Prostate gland (tissue), 2 donors: ENCODE measurements at regions of chr19 and their contacts with region 1.

Region 1: DNA sequence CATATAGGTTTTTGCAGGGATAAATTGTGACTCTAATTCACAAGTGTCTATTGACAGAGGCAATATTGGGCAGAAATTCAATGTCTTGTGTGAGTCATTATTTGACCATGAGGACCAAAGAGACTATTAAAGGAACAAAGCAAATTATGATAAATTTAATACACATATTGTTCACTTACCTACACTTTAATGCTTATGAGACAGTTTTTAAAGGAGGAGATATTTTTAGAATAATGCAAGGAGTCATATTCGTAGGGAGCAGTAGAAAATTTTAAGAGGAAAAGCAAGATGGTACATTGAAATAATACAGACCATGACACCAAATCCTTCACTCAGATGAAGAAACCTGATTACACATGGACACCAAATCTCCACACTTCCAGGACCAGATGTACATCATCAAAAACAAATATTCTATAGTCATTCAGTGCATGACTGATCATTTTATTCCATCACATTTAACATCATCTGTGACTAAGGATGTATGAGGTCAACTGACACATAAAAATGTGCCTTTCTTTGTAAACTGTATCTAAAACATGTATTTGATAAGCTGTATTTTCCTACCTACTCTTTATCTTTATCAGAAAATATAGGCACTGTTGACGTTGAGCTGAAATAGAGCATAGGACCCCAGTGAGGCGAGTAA is 4.2 kb upstream of the OR7A17 start:
- DNase-seq: no peak
- H3K4me3 ChIP-seq: no peak overlapping the region
- H3K27ac ChIP-seq: no peak overlapping the region
- H3K4me1 ChIP-seq: no peaks in the 10 kb centered on the region
- H3K27me3 ChIP-seq: no peaks in the 10 kb centered on the region
- CTCF ChIP-seq: no peak
- POLR2A ChIP-seq: no peak

Region 2: GRCh38 chr19:14571695-14572490 is 318.2 kb before region 1 on chr19 and contains the start of gene NDUFB7:
- intact Hi-C with region 1: loop called (anchors 10 kb)
- DNase-seq: peak; percentile 89
- H3K4me3 ChIP-seq: peak within 1 kb of the TSS; percentile 68 to 99
- H3K27ac ChIP-seq: peak within 1 kb of the TSS; percentile 54 to 82
- H3K4me1 ChIP-seq: no peaks in the 10 kb centered on the region
- H3K27me3 ChIP-seq: no peaks in the 10 kb centered on the region
- CTCF ChIP-seq: peak; percentile 62 to 90 (median 85)
- POLR2A ChIP-seq: peak; percentile 18
- total RNA-seq, gene NDUFB7: 507 to 534 TPM

Region 3: GRCh38 chr19:14961956-14962677 is 72.0 kb after region 1 on chr19:
- intact Hi-C with region 1: no loop called
- DNase-seq: no peak
- H3K4me3 ChIP-seq: no peak overlapping the region
- H3K27ac ChIP-seq: no peak overlapping the region
- H3K4me1 ChIP-seq: no peaks in the 10 kb centered on the region
- H3K27me3 ChIP-seq: no peaks in the 10 kb centered on the region
- CTCF ChIP-seq: no peak
- POLR2A ChIP-seq: no peak